ENCODE measurements at regions of chr2 and their contacts with region 1.

Region 1: DNA sequence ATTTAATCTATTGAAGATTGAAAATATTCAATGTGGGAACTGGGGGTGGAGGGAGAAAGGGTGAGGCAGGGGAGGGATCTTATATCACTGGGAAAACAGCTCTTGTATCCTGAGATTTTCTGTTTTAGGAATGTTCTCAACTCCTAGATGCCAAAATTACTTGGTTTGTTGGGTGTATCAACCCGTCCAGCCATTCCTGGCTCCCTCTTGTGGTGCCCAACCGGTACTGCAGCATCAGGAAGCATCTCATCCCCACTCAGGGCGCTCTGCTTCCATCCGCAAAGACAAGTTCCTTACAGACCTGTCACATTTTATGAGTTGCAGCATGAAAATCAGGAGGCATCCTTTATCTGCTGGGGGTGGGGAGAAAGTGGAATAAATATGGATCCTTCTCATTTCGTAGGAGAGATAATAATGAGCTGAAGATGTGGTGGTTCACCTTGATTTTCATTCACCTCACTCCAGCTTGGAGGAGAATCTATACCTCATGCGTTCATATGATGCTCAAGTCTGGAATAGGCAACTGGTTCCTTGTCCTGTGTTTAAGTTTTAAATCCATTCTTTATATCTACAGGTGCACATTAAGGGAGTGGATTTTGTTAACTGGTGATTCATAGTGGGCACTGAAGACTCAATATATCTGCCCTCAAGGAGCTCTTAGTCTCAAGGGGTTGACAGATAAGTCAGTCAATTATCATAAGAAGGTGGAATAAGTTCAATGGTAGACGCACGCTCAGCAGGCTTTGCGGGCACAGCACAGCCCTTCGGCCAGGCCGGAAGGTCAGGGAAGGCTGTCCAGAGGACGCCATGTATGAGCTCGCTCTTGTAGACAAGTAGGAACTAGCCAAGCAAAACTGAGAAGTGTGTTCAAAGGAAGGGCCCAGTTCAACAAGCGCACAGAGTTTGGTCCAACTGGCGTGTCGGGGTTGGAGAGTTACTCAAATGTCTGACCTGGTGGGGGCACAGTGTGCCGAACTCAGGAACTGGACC is 127.3 kb downstream of the RNF144A start:
- DNase-seq: peak; percentile 13 to 81 (median 62)
- ATAC-seq: peak; percentile 86
- H3K4me3 ChIP-seq: no peak overlapping the region
- H3K4me3 Mint-ChIP-seq: no peak overlapping the region
- H3K27ac ChIP-seq: no peak overlapping the region
- H3K27ac Mint-ChIP-seq: peak overlapping the region; percentile 15
- H3K4me1 ChIP-seq: no peaks in the 10 kb centered on the region
- H3K4me1 Mint-ChIP-seq: peaks cover 16% of the 10 kb centered on the region
- H3K27me3 ChIP-seq: no peaks in the 10 kb centered on the region
- H3K27me3 Mint-ChIP-seq: no peaks in the 10 kb centered on the region
- CTCF ChIP-seq: peak; percentile 97

Region 2: DNA sequence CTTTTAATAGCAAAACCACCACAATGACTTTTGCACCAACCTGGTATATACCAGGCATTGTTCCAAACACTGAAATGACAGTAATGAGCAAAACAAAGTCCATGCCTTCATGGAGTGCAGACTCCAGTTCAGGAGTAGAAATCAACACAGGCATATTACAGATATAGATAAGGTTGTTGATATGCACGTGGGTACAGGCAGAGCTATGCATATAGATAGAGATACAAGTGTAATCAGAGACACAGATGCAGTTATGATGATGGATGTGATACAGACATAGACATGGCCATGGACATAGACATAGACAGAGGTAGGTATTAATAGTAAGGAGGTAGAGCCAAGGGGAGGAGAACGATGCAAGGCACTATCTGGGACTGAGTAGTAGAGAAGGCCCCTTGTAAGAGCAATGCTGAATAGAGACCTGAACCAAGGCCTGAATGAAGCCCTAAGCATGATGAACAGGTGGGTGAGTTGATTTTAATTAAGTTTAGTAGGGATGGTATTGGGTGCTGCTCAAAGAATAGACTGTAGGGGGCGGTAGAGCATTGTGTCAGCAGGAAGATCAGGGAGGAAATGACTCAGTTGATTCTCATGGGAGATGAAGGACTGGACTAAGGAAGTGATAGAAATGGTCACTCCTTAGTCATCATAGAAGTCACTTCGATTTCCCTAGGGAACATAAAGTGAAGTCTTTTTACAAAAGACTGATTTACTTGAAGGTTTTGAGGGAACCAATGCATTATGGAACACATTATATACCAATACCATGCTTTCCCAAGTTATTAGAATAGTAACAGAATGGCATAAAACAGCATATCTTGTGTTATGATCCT is 218.3 kb before region 1 on chr2:
- CTCF ChIA-PET with region 1: interaction called, 9 read pairs
- POLR2A ChIA-PET with region 1: no interaction called
- intact Hi-C with region 1: loop called (anchors 1 to 2 kb)
- DNase-seq: peak; percentile 12 to 73 (median 51)
- ATAC-seq: peak; percentile 80
- H3K4me3 ChIP-seq: no peak overlapping the region
- H3K4me3 Mint-ChIP-seq: no peak overlapping the region
- H3K27ac ChIP-seq: no peak overlapping the region
- H3K27ac Mint-ChIP-seq: no peak overlapping the region
- H3K4me1 ChIP-seq: no peaks in the 10 kb centered on the region
- H3K4me1 Mint-ChIP-seq: peaks cover 7% of the 10 kb centered on the region
- H3K27me3 ChIP-seq: no peaks in the 10 kb centered on the region
- H3K27me3 Mint-ChIP-seq: peaks cover 2% of the 10 kb centered on the region
- CTCF ChIP-seq: peak; percentile 89

Region 3: GRCh38 chr2:6887751-6888192 is 156.8 kb before region 1 on chr2:
- CTCF ChIA-PET with region 1: interaction called, 19 read pairs
- POLR2A ChIA-PET with region 1: interaction called, 3 read pairs
- intact Hi-C with region 1: no loop called
- DNase-seq: no peak
- ATAC-seq: no peak
- H3K4me3 ChIP-seq: no peak overlapping the region
- H3K4me3 Mint-ChIP-seq: no peak overlapping the region
- H3K27ac ChIP-seq: no peak overlapping the region
- H3K27ac Mint-ChIP-seq: no peak overlapping the region
- H3K4me1 ChIP-seq: no peaks in the 10 kb centered on the region
- H3K4me1 Mint-ChIP-seq: no peaks in the 10 kb centered on the region
- H3K27me3 ChIP-seq: no peaks in the 10 kb centered on the region
- H3K27me3 Mint-ChIP-seq: no peaks in the 10 kb centered on the region
- CTCF ChIP-seq: no peak

Region 4: DNA sequence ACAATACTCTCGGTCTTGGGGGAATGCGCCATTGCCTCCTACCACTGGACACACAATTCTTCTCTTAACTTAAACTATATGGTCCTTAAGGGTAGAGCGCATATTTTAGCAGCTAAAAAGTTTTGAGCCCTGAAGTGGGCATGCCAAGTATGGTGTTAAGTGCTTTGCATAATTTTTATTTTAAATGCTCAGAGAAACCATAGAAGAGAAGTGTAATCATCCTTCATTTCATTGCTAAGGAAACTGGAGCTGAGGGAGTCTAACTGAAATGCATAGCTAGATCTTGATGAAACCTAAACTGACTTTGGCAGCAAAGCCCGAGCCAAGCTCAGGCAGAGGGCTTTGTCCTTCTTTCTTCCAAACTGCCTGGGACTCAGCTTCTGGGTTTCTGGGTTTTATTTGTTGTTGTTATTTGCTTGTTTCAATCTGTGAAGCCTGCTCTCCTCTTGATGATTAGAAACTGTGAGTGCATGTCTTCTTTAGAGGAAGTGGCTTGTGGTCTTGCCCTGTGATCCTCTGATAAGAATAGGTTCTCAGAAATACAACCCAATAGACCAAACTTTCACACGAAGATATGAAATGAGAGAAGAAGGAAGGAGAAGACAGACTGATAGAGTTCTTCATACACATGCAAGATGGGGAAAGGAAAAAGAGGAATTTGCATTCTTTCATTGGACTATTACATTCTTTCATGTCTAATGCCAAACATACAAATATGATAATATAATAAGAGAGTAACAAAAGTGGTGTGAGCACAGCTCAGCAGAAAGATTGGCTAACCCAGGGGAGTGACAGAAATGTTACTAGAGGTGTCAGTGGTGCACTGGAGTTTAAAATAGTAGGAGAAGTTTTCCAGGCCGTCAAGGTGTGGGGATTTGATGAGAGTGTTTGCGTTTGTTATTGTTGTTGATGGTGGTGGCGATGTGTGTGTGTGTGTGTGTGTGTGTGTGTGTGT is 134.8 kb before region 1 on chr2:
- CTCF ChIA-PET with region 1: interaction called, 45 read pairs
- POLR2A ChIA-PET with region 1: no interaction called
- intact Hi-C with region 1: no loop called
- DNase-seq: peak in 5 of 9 experiments; percentile 26 to 84 (median 53)
- ATAC-seq: peak; percentile 69
- H3K4me3 ChIP-seq: peak overlapping the region; percentile 1 to 19
- H3K4me3 Mint-ChIP-seq: peak overlapping the region; percentile 67
- H3K27ac ChIP-seq: peak overlapping the region; percentile 1 to 60
- H3K27ac Mint-ChIP-seq: peak overlapping the region; percentile 88
- H3K4me1 ChIP-seq: peaks cover 91% of the 10 kb centered on the region
- H3K4me1 Mint-ChIP-seq: peaks cover 89% of the 10 kb centered on the region
- H3K27me3 ChIP-seq: no peaks in the 10 kb centered on the region
- H3K27me3 Mint-ChIP-seq: no peaks in the 10 kb centered on the region
- CTCF ChIP-seq: no peak

Region 5: GRCh38 chr2:7023542-7023941 is 21.0 kb before region 1 on chr2:
- CTCF ChIA-PET with region 1: interaction called, 37 read pairs
- POLR2A ChIA-PET with region 1: no interaction called
- intact Hi-C with region 1: no loop called
- DNase-seq: no peak
- ATAC-seq: no peak
- H3K4me3 ChIP-seq: no peak overlapping the region
- H3K4me3 Mint-ChIP-seq: no peak overlapping the region
- H3K27ac ChIP-seq: no peak overlapping the region
- H3K27ac Mint-ChIP-seq: no peak overlapping the region
- H3K4me1 ChIP-seq: no peaks in the 10 kb centered on the region
- H3K4me1 Mint-ChIP-seq: no peaks in the 10 kb centered on the region
- H3K27me3 ChIP-seq: no peaks in the 10 kb centered on the region
- H3K27me3 Mint-ChIP-seq: no peaks in the 10 kb centered on the region
- CTCF ChIP-seq: no peak

Region 6: GRCh38 chr2:7057865-7058400 is 13.4 kb after region 1 on chr2:
- CTCF ChIA-PET with region 1: interaction called, 41 read pairs
- POLR2A ChIA-PET with region 1: interaction called, 5 read pairs
- intact Hi-C with region 1: loop called in 1 of 2 experiments (anchors 2 kb)
- DNase-seq: peak in 3 of 9 experiments; percentile 28 to 56 (median 33)
- ATAC-seq: peak; percentile 43
- H3K4me3 ChIP-seq: peak overlapping the region in 1 of 2 experiments; percentile 30
- H3K4me3 Mint-ChIP-seq: peak overlapping the region; percentile 75
- H3K27ac ChIP-seq: peak overlapping the region; percentile 30 to 70
- H3K27ac Mint-ChIP-seq: peak overlapping the region; percentile 91
- H3K4me1 ChIP-seq: peaks cover 53% of the 10 kb centered on the region
- H3K4me1 Mint-ChIP-seq: peaks cover 25% of the 10 kb centered on the region
- H3K27me3 ChIP-seq: no peaks in the 10 kb centered on the region
- H3K27me3 Mint-ChIP-seq: no peaks in the 10 kb centered on the region
- CTCF ChIP-seq: no peak

Region 7: DNA sequence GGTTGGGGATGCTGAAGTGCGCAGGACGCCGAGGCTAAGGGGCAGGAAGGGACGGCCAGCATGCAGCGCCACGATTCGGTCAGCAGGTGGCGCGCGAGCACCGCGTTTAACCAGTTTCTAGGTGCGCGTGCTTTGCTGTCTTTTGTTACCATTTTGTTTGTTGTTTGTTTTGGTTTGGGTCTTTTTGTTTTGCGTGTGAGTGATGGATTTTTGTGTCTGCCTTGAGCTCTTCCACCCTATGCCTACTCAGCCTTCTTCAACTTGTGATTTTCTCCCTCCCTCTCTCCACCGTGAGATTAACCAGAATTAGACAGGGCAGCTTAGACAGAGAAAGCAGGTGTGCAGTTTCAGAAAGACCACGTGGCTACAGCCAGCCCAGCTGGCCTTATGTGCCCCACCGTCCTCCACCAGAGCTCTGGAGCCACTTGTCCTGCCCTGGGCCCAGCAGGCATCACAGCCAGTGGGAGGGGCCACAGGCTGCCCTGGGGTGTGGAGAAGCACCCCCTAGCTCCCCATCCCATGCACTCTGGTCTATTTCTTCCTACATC is 52.9 kb after region 1 on chr2:
- CTCF ChIA-PET with region 1: interaction called, 25 read pairs
- POLR2A ChIA-PET with region 1: no interaction called
- intact Hi-C with region 1: no loop called
- DNase-seq: peak; percentile 60 to 87 (median 74)
- ATAC-seq: peak; percentile 90
- H3K4me3 ChIP-seq: peak overlapping the region; percentile 35 to 51
- H3K4me3 Mint-ChIP-seq: peak overlapping the region; percentile 78
- H3K27ac ChIP-seq: no peak overlapping the region
- H3K27ac Mint-ChIP-seq: no peak overlapping the region
- H3K4me1 ChIP-seq: peaks cover 6% of the 10 kb centered on the region
- H3K4me1 Mint-ChIP-seq: peaks cover 4% of the 10 kb centered on the region
- H3K27me3 ChIP-seq: no peaks in the 10 kb centered on the region
- H3K27me3 Mint-ChIP-seq: no peaks in the 10 kb centered on the region
- CTCF ChIP-seq: peak; percentile 99

Region 8: GRCh38 chr2:7146151-7146550 is 101.6 kb after region 1 on chr2:
- CTCF ChIA-PET with region 1: no interaction called
- POLR2A ChIA-PET with region 1: no interaction called
- intact Hi-C with region 1: no loop called
- DNase-seq: no peak
- ATAC-seq: no peak
- H3K4me3 ChIP-seq: no peak overlapping the region
- H3K4me3 Mint-ChIP-seq: no peak overlapping the region
- H3K27ac ChIP-seq: no peak overlapping the region
- H3K27ac Mint-ChIP-seq: no peak overlapping the region
- H3K4me1 ChIP-seq: no peaks in the 10 kb centered on the region
- H3K4me1 Mint-ChIP-seq: no peaks in the 10 kb centered on the region
- H3K27me3 ChIP-seq: no peaks in the 10 kb centered on the region
- H3K27me3 Mint-ChIP-seq: peaks cover 2% of the 10 kb centered on the region
- CTCF ChIP-seq: no peak

Measured in CD8-positive, alpha-beta T cell (primary cell).